K562 (cell line): ENCODE measurements at regions of chr19 and their contacts with region 1.

Region 1: GRCh38 chr19:32041681-32042292 is 303.6 kb upstream of the ZNF507 start:
- DNase-seq: peak; percentile 38 to 59 (median 46)
- ATAC-seq: peak; percentile 62
- H3K4me3 ChIP-seq: no peak overlapping the region
- H3K27ac ChIP-seq: no peak overlapping the region
- H3K4me1 ChIP-seq: no peaks in the 10 kb centered on the region
- H3K27me3 ChIP-seq: peaks cover 7 to 16% of the 10 kb centered on the region in 2 experiments; a peak in 2 of 5 replicates
- CTCF ChIP-seq: peak; percentile 75 to 81 (median 76)
- EP300 ChIP-seq: no peak
- POLR2A ChIP-seq: no peak
- RAD21 ChIP-seq: peak; percentile 17 to 47; a peak in 2 of 4 replicates

Region 2: DNA sequence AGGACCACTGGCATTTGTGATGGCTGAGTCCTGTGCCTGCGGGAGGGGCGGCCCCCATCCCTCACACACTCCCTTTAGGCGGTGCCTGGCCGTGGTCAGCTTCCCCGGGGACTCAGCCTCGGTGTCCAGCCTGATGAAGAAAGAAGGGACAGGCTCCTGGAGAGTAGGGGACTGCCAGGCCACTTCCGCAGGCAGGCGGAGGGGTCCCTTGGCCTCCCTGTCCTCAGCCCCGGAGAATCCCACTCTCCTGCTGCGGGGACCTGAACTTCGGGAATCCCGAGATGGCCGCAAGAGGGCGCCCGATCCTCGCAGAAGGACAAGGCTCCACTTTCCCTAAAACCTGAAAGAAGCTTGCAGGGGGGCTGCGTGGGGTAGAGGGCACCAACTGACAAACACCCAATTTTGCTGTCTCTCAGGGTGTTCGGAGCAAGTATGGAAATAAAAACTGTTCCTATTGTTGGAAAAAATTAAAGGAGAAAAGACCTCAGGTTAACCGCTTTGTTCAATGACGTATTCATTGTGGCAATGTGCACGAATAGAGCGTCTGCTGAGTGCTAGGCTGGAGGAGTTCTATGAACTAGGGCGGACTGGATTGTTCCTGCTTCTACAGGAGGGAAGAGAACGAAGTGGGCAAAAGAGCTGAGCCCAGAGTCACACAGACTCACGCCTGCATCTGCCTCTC is 1372.3 kb before region 1 on chr19:
- CTCF ChIA-PET with region 1: no interaction called
- POLR2A ChIA-PET with region 1: no interaction called
- in situ Hi-C with region 1: loop called (anchors 10 kb)
- intact Hi-C with region 1: no loop called
- DNase-seq: peak; percentile 47 to 64 (median 59)
- ATAC-seq: peak; percentile 88
- H3K4me3 ChIP-seq: no peak overlapping the region
- H3K27ac ChIP-seq: no peak overlapping the region
- H3K4me1 ChIP-seq: peaks cover 0 to 5% of the 10 kb centered on the region in 2 experiments; a peak in 2 of 5 replicates
- H3K27me3 ChIP-seq: peaks cover 3 to 31% of the 10 kb centered on the region in 2 experiments; a peak in 2 of 5 replicates
- CTCF ChIP-seq: peak; percentile 69 to 79 (median 74)
- EP300 ChIP-seq: no peak
- POLR2A ChIP-seq: no peak
- RAD21 ChIP-seq: peak; percentile 29 to 66; a peak in 3 of 4 replicates

Region 3: DNA sequence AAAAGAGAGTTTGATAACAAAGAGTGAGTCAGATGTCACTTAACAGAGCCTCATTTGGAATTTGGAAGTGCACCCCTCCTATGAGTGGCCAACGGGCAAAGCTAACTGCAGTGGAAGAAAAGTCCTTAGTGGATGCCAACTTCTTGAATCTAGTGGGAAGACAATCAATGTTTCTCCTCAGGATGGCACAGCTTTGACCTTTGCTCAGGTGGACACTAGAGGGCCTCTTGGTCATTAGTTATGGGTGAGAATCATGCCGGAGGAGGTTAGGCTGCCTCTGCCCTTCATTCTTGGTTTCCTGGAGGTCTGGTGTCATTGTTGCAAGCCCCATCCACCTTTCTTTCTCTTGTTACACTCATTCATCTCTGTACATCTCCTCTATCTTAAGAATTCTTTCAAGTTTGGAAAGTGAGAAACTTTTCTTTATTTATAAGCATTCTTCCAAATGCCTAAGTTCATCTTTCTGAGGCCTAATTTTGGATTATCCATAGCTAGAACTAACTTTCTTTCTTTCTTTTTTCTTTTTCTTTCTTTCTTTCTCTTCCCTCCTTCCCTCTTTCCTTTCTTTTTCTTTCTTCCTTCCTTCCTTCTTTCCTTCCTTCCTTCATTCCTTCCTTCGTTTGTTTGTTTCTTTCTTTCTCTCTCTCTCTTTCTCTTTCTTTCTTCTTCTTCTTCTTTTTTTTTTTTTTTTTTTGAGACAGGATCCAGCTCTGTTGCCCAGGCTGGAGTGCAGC is 365.3 kb before region 1 on chr19:
- CTCF ChIA-PET with region 1: no interaction called
- POLR2A ChIA-PET with region 1: no interaction called
- in situ Hi-C with region 1: no loop called
- intact Hi-C with region 1: loop called (anchors 5 kb)
- DNase-seq: peak in 3 of 4 experiments; percentile 13 to 33 (median 20)
- ATAC-seq: peak; percentile 67
- H3K4me3 ChIP-seq: no peak overlapping the region
- H3K27ac ChIP-seq: no peak overlapping the region
- H3K4me1 ChIP-seq: no peaks in the 10 kb centered on the region
- H3K27me3 ChIP-seq: no peaks in the 10 kb centered on the region; a peak in 1 of 5 replicates
- CTCF ChIP-seq: peak; percentile 30 to 54 (median 46); a peak in 3 of 6 replicates
- EP300 ChIP-seq: no peak
- POLR2A ChIP-seq: no peak
- RAD21 ChIP-seq: peak in 1 of 2 experiments; percentile 43; a peak in 1 of 4 replicates

Region 4: GRCh38 chr19:32373585-32374295 is 332.0 kb after region 1 on chr19:
- CTCF ChIA-PET with region 1: no interaction called
- POLR2A ChIA-PET with region 1: no interaction called
- in situ Hi-C with region 1: no loop called
- intact Hi-C with region 1: no loop called
- DNase-seq: peak; percentile 51 to 91 (median 65)
- ATAC-seq: peak; percentile 98
- H3K4me3 ChIP-seq: no peak overlapping the region
- H3K27ac ChIP-seq: peak overlapping the region; percentile 93
- H3K4me1 ChIP-seq: peaks cover 4 to 33% of the 10 kb centered on the region in 2 experiments; a peak in 4 of 5 replicates
- H3K27me3 ChIP-seq: no peaks in the 10 kb centered on the region
- CTCF ChIP-seq: no peak
- EP300 ChIP-seq: peak; percentile 83
- POLR2A ChIP-seq: 0 out of 2 replicates have a peak, but pooled peaks have one; percentile 28
- RAD21 ChIP-seq: no peak